ENCODE measurements at regions of chr17 and their contacts with region 1.

Region 1: GRCh38 chr17:49496183-49496866 is 1.2 kb downstream of the NGFR start:
- DNase-seq: no peak
- H3K4me3 ChIP-seq: peak overlapping the region; percentile 32 to 70 (median 44)
- H3K27ac ChIP-seq: peak overlapping the region in 2 of 4 donors; percentile 14 to 46
- H3K4me1 ChIP-seq: peaks cover 30 to 47% (median 30%) of the 10 kb centered on the region in 3 donors
- H3K27me3 ChIP-seq: peaks cover 4 to 79% (median 20%) of the 10 kb centered on the region in 4 donors
- CTCF ChIP-seq: peak; percentile 72 to 93 (median 88)
- POLR2A ChIP-seq: no peak

Region 2: GRCh38 chr17:49548506-49549310 is 52.4 kb after region 1 on chr17:
- intact Hi-C with region 1: loop called (anchors 5 kb)
- DNase-seq: no peak
- H3K4me3 ChIP-seq: no peak overlapping the region
- H3K27ac ChIP-seq: no peak overlapping the region
- H3K4me1 ChIP-seq: peaks cover 0 to 24% (median 15%) of the 10 kb centered on the region in 3 donors
- H3K27me3 ChIP-seq: peaks cover 0 to 74% (median 0%) of the 10 kb centered on the region in 4 donors
- CTCF ChIP-seq: peak in 5 of 6 experiments; percentile 9 to 39 (median 36)
- POLR2A ChIP-seq: no peak

Region 3: DNA sequence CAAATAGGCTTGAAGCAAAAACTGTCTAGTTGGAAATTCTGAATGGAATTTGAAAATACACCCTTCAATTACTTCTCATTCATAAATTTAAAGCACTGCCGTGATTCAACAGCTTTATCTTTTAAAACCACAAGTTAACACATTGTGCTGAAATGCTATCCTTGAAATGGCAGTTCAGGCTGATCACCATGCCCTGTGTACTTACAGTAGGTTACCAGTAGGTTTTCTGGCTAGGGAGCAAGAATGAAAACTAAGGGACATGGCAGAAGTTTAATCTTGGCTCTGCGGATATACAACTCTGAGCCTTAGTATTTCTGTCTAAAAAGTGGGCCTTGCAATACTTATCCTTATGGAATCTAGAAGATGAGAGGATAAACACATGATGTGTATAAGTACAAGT is 107.4 kb after region 1 on chr17:
- intact Hi-C with region 1: no loop called
- DNase-seq: no peak
- H3K4me3 ChIP-seq: no peak overlapping the region
- H3K27ac ChIP-seq: peak overlapping the region in 1 of 4 donors; percentile 31
- H3K4me1 ChIP-seq: peaks cover 0 to 21% (median 3%) of the 10 kb centered on the region in 3 donors
- H3K27me3 ChIP-seq: no peaks in the 10 kb centered on the region
- CTCF ChIP-seq: peak in 1 of 6 experiments; percentile 21
- POLR2A ChIP-seq: no peak

Measured in esophagus squamous epithelium (tissue), 5 donors.